OCI-LY7 (cell line): ENCODE measurements at regions of chr16 and their contacts with region 1.

Region 1: DNA sequence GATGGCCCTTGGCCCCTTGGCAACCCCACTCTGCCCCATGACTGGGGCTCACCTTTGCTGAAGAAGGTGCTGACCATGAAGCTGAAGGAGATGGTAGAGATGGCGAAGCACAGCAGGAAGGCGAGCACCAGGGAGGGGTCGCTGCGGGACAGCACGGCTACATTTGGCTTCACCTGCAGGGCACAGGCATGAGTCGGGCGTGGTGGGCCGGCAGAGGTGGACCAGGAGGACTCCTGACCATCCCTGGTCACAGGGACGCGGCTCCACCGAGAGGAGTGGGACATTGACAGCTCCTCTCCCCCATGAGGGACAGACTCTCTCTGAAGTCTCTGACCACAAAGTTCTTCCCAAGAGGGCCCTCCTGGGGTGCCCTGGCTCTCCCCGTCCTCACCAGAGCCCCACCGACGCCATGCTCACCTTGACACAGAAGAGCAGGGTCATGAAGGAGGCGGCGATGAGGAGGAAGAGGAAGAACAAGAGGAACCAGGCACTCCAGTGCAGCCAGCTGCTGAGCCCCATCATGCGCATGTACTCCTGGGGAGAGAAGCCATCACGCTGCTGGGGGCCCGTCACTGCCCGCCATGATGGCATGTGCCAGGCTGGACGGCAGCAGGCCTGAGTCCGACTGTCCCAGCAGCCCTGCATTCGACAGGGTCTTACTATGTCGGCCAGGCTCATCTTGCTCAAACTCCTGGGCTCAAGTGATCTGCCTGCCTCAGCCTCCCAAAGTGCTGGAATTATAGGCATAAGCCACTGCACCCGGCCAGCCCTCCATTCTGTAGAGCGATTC is 23.1 kb downstream of the ABCA3 start:
- DNase-seq: no peak
- H3K4me3 ChIP-seq: no peak overlapping the region
- H3K27ac ChIP-seq: no peak overlapping the region
- H3K4me1 ChIP-seq: peaks cover 6% of the 10 kb centered on the region
- CTCF ChIP-seq: no peak

Region 2: DNA sequence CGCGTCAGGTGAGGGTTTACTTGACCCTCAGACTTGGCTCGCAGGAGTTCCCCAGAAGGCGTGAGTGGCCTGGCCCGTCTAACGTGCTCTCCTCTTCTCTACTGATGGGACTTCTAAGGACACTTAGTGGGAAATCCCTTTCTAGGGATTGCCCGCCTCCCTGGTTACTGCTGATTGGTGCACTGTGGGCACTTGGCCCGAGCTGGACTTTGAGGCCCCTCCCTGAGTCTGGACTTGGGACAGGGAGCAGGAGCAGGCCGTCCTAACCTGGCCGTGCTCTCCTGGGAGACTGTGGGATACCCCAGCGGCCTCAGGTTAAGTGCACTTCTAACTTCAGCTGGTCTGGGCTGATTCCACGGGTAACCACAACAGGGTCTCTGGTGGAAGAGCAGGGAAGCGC is 720.3 kb before region 1 on chr16:
- CTCF ChIA-PET with region 1: no interaction called
- POLR2A ChIA-PET with region 1: interaction called, 13 read pairs
- intact Hi-C with region 1: no loop called
- DNase-seq: no peak
- H3K4me3 ChIP-seq: no peak overlapping the region
- H3K27ac ChIP-seq: no peak overlapping the region
- H3K4me1 ChIP-seq: no peaks in the 10 kb centered on the region
- CTCF ChIP-seq: no peak